Activated CD4-positive, alpha-beta T cell treated with anti-CD3 and anti-CD28 coated beads, Interleukin-2, amount 10 ng/mL, durations not matched to agents 24 days and 14 days (primary cell): ENCODE measurements at regions of chr7 and their contacts with region 1.

Region 1: DNA sequence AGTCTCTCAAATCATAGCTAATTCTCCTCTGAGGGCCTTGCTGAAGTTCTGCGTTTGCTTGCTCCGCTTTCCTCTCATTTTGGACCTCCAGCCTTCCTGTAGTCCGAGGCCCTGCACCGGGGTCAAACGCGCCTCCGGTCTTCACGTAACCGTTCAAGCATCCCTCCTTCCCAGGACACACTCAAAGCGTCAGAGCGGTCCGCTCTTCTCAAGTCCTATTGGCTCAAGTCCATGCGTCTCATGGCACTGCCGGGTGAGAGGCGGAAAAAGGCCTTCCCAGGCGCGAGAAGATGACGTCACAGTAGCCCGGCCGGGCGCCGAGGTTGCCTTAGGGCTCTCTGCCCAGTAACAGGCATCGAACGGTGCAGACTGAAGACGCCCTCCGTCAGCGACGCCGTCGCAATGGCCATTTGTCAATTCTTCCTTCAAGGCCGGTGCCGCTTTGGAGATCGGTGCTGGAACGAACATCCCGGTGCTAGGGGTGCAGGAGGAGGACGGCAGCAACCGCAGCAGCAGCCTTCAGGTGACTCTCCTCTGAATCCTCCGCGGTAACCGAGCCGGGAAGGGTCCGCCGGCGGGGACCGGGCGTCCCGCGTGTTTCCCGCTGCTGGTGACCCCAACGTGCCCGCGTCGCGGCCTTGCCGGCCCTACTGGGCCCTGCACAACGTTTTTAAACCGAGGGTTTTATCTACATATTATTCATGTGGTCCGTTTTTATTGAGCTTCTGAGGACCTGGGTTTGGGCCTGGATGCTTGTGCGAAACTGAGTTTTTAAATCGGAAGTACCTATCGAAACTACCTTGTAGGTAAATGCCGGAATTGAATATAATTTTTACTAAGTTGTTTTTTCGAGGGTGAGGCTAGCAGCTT is at the start of gene NUP42:
- DNase-seq: peak; percentile 99
- H3K4me3 Mint-ChIP-seq: peak within 1 kb of the TSS; percentile 94
- H3K27ac Mint-ChIP-seq: peak within 1 kb of the TSS; percentile 99
- H3K4me1 Mint-ChIP-seq: peaks cover 31% of the 10 kb centered on the region
- H3K27me3 Mint-ChIP-seq: peaks cover 7% of the 10 kb centered on the region
- total RNA-seq, gene NUP42: 51.9 and 60.9 TPM in 2 replicates

Region 2: GRCh38 chr7:22672846-22673652 is 508.9 kb before region 1 on chr7:
- intact Hi-C with region 1: loop called (anchors 5 kb)
- DNase-seq: peak; percentile 73
- H3K4me3 Mint-ChIP-seq: peak overlapping the region; percentile 26
- H3K27ac Mint-ChIP-seq: no peak overlapping the region
- H3K4me1 Mint-ChIP-seq: peaks cover 55% of the 10 kb centered on the region
- H3K27me3 Mint-ChIP-seq: peaks cover 8% of the 10 kb centered on the region

Region 3: DNA sequence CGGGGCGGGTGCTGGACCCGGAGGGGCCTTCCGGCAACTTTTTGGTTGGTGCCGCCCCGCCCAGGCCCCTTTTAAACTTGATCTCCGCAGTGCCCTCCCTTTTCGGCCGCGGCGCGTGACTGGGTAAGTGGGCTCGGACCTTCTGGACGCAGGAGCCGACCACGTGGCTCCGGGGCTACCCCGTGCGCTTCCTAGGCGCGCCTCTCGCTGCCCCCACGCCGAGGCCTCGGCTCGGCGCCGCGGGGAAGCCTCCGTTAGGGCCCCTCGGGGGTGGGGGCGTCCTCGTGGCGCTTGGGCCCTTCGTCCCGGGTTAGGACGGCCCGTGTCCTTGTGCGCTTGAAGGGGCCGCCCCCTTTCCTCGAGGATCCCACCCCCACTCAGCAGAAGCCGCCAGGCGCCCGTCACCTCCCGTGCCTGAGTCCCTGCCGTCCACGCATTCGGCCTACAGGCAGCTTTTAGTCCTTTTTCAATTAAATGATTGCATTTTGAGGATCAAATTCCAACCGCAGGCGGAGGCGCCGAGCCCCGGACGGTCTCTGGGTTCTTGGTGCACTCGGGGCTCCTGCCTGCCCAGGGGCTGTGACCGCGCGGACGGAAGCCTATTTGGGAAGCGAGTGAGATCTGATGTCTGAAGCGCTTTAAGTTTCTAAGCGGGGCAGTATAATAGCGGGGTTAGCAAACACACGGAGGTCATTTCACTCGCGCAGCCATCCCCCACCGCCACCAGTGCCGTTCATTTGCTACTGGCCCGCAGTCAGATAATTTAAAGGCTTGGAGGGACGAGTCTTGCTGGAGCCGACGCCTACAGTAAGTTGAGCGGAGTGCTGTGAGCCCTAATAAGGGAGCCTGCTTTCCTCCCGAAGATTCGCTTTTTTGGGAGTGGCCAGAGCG is 327.5 kb before region 1 on chr7:
- intact Hi-C with region 1: loop called (anchors 10 kb)
- DNase-seq: peak; percentile 94
- H3K4me3 Mint-ChIP-seq: peak overlapping the region; percentile 98
- H3K27ac Mint-ChIP-seq: peak overlapping the region; percentile 93
- H3K4me1 Mint-ChIP-seq: peaks cover 28% of the 10 kb centered on the region
- H3K27me3 Mint-ChIP-seq: peaks cover 1% of the 10 kb centered on the region

Region 4: GRCh38 chr7:23093546-23093945 is 88.4 kb before region 1 on chr7:
- intact Hi-C with region 1: loop called (anchors 5 kb)
- DNase-seq: no peak
- H3K4me3 Mint-ChIP-seq: no peak overlapping the region
- H3K27ac Mint-ChIP-seq: no peak overlapping the region
- H3K4me1 Mint-ChIP-seq: no peaks in the 10 kb centered on the region
- H3K27me3 Mint-ChIP-seq: peaks cover 21% of the 10 kb centered on the region

Region 5: DNA sequence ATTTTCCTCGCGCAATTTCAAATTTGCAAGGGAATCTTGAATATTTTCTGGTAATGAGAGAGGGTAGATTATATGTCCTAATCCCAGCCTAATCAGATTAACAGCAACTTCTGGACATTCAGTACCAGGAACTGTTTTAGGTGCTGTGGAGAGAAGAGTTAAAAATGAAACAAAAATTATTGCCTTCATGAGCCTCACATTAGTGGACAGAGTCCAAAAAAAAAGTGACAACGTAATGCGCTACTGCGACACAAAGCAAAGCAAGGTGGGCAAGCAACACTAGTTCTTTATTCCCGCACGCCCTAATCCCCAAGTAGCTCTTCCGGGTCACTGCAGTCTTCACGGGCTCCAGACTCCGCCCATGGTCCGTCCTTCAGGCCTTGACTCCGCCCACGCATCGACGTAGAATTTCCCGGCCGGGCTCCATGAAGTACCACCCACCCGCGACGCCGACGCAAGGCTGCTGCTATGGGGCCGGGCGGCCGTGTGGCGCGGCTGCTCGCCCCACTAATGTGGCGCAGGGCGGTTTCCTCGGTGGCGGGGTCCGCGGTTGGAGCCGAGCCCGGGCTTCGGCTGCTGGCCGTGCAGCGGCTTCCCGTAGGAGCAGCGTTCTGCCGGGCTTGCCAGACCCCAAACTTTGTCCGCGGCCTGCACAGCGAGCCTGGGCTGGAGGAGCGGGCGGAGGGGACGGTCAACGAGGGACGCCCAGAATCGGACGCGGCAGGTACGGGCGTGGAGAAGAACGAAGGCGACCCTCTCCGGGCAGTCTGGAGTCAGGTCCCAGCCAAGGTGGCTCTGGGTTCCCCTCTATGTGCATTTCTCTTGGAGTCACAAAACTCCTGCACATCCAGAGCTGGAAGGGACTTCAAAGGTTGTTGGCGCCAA is 117.2 kb after region 1 on chr7 and contains the start of gene MALSU1:
- intact Hi-C with region 1: loop called (anchors 2 kb)
- DNase-seq: peak; percentile 99
- H3K4me3 Mint-ChIP-seq: peak within 1 kb of the TSS; percentile 93
- H3K27ac Mint-ChIP-seq: peak within 1 kb of the TSS; percentile 90
- H3K4me1 Mint-ChIP-seq: peaks cover 28% of the 10 kb centered on the region
- H3K27me3 Mint-ChIP-seq: no peaks in the 10 kb centered on the region
- total RNA-seq, gene MALSU1: 92.8 and 98.8 TPM in 2 replicates

Region 6: GRCh38 chr7:23531794-23532489 is 350.0 kb after region 1 on chr7 and contains the start of gene TRA2A:
- intact Hi-C with region 1: loop called (anchors 5 kb)
- DNase-seq: peak; percentile 99
- H3K4me3 Mint-ChIP-seq: peak within 1 kb of the TSS; percentile 97
- H3K27ac Mint-ChIP-seq: peak within 1 kb of the TSS; percentile 99
- H3K4me1 Mint-ChIP-seq: peaks cover 29% of the 10 kb centered on the region
- H3K27me3 Mint-ChIP-seq: no peaks in the 10 kb centered on the region
- total RNA-seq, gene TRA2A: 96.8 and 103 TPM in 2 replicates